ENCODE measurements at regions of chr7 and their contacts with region 1.

Region 1: GRCh38 chr7:63925623-63926460 is 72.8 kb upstream of the ZNF722 start:
- DNase-seq: peak; percentile 91

Region 2: DNA sequence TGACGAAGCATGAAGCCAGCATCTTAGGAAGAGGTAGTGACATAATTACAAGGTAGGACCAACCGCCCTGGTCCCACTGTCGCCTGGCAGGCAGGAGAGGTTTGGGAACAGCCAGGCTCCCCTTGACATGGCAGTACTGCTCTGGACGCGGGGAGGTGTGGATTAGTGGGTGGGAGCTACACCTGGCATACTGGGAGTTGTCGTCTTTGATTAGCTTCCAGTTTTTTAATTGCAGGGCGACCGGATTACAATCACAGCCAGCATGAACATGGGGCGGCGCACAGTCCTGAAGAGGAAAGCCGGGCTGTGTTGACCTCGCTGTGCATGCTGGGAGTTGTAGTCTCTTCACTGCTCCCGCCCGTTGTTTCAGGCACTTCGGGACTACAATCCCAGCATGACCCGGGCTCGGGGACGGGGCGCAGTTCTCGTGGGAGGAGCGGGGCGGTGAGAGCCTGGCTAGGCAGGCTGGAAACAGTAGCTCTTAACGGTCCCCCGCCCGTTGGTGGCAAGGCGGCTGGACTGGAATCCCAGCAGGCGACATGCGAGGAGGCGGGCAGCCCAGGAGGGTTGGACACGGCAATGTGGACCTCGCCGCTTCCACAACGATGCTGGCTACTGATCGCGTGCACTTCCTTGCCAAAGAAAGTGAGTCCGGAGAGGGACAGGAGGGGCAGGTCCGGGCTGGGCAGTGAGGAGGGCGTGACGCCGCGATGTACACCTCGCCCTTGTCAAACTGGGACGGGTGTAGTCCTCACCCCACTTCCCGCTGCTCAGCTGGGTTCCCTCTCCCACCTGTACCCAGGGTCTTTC is 25.2 kb before region 1 on chr7:
- intact Hi-C with region 1: loop called (anchors 2 kb)
- DNase-seq: peak; percentile 93

Region 3: GRCh38 chr7:64045301-64046040 is 119.6 kb after region 1 on chr7 and contains the start of gene ZNF727:
- intact Hi-C with region 1: loop called (anchors 5 kb)
- DNase-seq: no peak
- total RNA-seq, gene ZNF727: 1.4 TPM

Measured in cardiac septum (tissue), 1 donor.